Right cardiac atrium (tissue), 5 donors: ENCODE measurements at regions of chr19 and their contacts with region 1.

Region 1: GRCh38 chr19:46860125-46860845 is 512 bp upstream of the ARHGAP35 start:
- DNase-seq: peak; percentile 99 to 100 (median 99)
- ATAC-seq: peak; percentile 93 to 94
- H3K4me3 ChIP-seq: peak overlapping the region; percentile 100
- H3K27ac ChIP-seq: peak overlapping the region; percentile 86
- H3K4me1 ChIP-seq: peaks cover 12% of the 10 kb centered on the region
- H3K27me3 ChIP-seq: no peaks in the 10 kb centered on the region

Region 2: DNA sequence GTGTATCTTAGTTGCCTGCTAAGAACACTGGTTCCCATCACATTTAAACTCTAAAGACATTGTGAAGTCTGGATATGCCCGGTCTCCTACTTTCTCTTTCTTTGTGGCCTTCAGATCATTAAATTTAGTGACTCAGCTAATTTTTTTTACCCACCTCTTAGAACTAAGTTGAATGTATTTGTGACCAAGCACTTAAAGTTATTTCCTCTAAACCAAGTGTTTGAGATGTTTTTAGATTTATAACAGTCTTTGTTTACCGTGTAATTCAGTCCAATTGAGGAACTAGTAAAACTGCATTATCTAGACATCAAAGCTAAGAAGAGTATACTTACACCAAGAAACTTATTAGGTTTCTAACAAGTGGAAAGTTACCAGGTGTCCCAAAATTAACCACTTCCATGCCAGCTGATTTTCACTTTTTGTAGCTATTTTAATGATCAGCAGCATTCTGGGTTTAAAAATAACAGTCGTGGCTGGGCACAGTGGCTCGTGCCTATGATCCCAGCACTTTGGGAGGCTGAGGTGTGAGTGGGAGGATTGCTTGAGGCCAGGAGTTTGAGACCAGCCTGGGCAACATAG is 53.7 kb after region 1 on chr19:
- intact Hi-C with region 1: loop called in 2 of 4 experiments (anchors 10 kb)
- DNase-seq: no peak
- ATAC-seq: no peak
- H3K4me3 ChIP-seq: no peak overlapping the region
- H3K27ac ChIP-seq: peak overlapping the region; percentile 42
- H3K4me1 ChIP-seq: peaks cover 10% of the 10 kb centered on the region
- H3K27me3 ChIP-seq: no peaks in the 10 kb centered on the region

Region 3: DNA sequence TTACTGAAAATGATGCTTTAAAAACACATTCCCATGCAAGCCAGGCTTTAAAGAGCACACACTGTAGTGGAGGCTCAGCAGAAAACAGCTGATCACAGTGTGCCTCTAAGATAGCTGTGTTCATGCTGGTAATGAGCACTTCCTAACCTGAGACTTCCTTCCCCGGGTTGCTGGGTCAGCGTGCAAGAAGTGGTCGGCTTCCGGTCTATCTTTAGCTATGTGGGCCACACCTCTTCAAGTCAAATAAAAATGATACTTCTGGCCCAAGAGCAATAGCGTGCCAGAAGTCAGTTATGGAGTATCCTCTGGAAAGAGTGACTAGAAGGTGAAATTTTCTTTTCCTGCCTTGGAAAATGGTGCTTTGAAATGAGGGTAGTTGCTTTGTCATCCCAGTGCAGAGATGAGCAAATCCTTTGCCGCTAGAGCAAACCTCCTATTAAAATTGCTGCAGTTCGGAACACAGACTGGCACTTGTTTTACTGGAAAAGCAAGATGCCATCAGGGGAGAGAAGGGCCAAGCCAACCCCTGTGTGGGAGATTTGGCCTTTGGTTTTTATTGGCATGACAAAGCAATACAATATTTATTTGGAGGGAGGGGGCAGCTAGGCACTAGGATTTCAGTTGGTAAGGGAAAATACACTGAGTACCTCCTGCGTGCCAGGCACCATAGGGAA is 64.7 kb after region 1 on chr19:
- intact Hi-C with region 1: loop called in 1 of 4 experiments (anchors 10 kb)
- DNase-seq: no peak
- ATAC-seq: peak; percentile 54 to 91
- H3K4me3 ChIP-seq: no peak overlapping the region
- H3K27ac ChIP-seq: no peak overlapping the region
- H3K4me1 ChIP-seq: peaks cover 23% of the 10 kb centered on the region
- H3K27me3 ChIP-seq: no peaks in the 10 kb centered on the region

Region 4: DNA sequence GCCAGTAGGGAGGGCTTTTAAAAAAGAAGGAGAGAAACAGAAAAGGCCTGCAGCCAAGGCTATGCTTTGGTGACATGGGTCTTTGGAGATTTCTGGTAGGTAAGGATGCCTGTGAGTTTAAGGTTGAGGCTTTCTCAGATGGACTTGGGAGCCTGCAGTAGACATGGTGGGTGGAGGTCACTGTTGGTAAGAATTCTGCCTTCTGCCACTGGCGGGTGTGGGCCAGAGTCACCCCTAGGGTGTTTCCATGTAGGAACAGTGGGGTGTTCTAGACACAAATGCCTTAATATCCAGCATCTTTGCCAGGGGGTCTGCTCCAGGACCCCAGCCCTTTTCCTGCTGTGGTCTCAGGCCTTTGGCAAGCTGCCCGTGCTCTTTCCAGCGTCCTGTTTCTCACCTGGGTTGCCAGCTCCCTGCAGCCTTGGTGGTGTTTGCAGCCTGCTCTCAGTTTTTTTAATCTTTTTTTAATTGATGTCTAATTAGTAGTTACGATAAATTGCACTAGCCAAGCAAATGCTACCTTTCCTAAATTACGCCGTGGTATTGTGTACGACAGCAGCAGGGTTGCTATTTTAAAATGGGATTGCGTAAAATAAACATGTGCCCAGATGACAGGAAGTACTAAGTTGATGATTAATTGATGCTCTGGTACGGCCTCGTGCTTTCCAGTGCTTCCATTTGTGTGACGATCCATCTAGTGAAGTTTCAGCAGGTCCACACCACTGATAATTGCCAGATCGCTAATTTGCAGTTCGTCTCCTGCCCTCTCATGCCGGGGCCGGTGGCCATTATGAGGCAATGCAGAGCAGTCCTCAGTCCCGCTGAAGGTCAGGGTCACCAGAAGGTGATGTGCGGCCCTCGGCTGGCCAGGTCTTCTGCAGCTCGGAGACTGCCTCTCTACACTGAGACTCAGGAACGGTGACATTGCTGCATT is 124.1 kb after region 1 on chr19:
- intact Hi-C with region 1: loop called in 1 of 4 experiments (anchors 5 kb)
- DNase-seq: peak in 1 of 3 donors; percentile 51
- ATAC-seq: peak; percentile 25 to 61
- H3K4me3 ChIP-seq: no peak overlapping the region
- H3K27ac ChIP-seq: peak overlapping the region; percentile 60
- H3K4me1 ChIP-seq: peaks cover 19% of the 10 kb centered on the region
- H3K27me3 ChIP-seq: no peaks in the 10 kb centered on the region

Region 5: GRCh38 chr19:46990991-46991676 is 130.8 kb after region 1 on chr19:
- intact Hi-C with region 1: loop called (anchors 2 to 5 kb)
- DNase-seq: peak; percentile 85 to 93 (median 90)
- ATAC-seq: peak; percentile 80 to 83
- H3K4me3 ChIP-seq: no peak overlapping the region
- H3K27ac ChIP-seq: peak overlapping the region; percentile 85
- H3K4me1 ChIP-seq: peaks cover 10% of the 10 kb centered on the region
- H3K27me3 ChIP-seq: no peaks in the 10 kb centered on the region